CD4-positive, alpha-beta memory T cell (primary cell): ENCODE measurements at regions of chr7 and their contacts with region 1.

Region 1: DNA sequence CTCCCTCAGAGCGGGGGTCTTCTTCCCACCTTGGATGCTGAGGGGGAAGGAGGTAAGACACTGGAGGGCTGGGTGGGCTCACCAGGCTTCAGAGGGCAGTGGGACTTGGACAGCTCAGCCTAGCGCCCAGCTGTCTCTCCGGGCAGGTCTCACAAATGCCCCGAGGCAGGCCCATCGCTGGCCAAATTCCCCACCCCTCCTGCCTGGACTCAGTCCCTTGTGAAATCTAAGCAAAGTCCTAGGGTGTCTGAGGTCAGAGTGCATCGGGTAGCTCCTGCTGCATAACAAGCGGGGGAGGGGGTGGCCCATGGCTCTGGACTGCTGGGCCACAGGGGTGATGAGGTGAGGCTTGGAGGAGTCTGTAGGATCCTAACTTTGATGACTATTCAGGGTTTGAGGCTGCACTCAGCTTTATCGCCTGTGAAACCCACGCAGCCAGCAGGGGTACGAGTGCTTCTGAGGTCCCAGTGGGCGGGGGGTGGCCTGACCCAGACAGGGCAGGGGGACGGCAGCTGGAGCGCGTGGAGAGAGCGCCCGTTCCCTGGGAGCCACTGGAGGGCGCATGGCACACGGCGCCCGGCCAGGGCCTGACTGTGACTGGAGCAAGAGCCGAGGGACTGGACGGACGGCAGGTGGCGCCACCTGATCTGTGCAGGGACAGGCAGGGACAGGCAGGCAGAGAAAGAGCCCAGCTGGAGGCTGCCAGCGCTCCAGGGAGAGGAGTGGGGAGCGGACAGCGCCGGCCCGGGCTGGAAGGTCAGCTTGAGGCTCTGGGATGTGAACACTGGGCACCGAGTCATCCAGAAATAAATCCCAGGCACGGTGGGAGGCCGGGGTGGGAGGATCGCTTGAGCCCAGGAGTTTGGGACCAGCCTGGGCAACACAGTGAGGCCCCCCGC is 10.0 kb downstream of the CYP2W1 start:
- DNase-seq: peak; percentile 88 to 92 (median 89)
- H3K4me3 ChIP-seq: no peak overlapping the region
- H3K4me3 Mint-ChIP-seq: no peak overlapping the region
- H3K27ac ChIP-seq: no peak overlapping the region
- H3K27ac Mint-ChIP-seq: peak overlapping the region in 2 of 7 donors; percentile 51 to 89
- H3K4me1 ChIP-seq: peaks cover 4% of the 10 kb centered on the region
- H3K4me1 Mint-ChIP-seq: peaks cover 0 to 6% (median 3%) of the 10 kb centered on the region in 4 donors
- H3K27me3 ChIP-seq: no peaks in the 10 kb centered on the region
- H3K27me3 Mint-ChIP-seq: no peaks in the 10 kb centered on the region

Region 2: DNA sequence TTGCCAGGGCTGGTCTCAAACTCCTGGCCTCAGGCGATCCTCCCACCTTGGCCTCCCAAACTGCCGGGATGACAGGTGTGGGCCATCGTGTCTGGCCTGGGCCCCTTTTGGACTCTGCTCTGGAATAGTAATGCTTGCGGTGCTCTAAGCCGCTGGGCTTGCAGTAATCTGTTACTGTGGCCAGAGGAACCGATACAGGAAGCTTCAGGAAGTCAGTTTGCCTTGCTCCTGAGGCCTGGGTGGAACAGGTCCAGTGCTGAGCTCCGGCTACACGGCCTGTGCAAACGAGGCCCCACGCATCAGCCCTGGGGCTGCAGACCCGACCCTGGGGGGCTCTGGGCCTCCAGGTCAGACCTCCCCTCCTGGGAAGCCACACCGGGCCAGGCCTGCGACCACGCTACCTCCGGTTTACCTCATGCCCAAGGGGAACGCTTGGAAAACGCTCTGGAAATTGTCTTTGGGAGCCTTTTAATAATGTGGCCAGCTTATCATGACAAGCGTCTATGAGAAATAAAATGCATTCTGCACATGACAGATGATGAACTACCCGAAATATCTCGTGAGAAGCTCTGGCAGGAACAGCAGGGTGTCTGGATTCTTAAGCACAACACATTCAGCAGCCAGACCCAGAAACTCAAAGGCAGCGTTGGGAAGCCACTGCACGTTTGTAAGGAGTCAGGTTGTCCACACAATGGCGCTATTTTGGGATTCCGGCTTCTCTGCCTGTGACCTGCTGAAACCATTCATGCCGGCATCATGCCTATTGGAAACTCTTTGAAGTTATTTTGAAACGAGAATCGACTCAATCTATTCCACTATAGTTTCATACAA is 28.3 kb before region 1 on chr7:
- CTCF ChIA-PET with region 1: no interaction called
- POLR2A ChIA-PET with region 1: no interaction called
- intact Hi-C with region 1: no loop called
- DNase-seq: peak in 1 of 5 donors; percentile 9
- H3K4me3 ChIP-seq: no peak overlapping the region
- H3K4me3 Mint-ChIP-seq: peak overlapping the region in 2 of 8 donors; percentile 35 to 40
- H3K27ac ChIP-seq: no peak overlapping the region
- H3K27ac Mint-ChIP-seq: peak overlapping the region in 3 of 7 donors; percentile 27 to 70 (median 51)
- H3K4me1 ChIP-seq: peaks cover 24% of the 10 kb centered on the region
- H3K4me1 Mint-ChIP-seq: peaks cover 10 to 32% (median 22%) of the 10 kb centered on the region in 4 donors
- H3K27me3 ChIP-seq: no peaks in the 10 kb centered on the region
- H3K27me3 Mint-ChIP-seq: peaks cover 7 to 11% of the 10 kb centered on the region in 2 donors

Region 3: DNA sequence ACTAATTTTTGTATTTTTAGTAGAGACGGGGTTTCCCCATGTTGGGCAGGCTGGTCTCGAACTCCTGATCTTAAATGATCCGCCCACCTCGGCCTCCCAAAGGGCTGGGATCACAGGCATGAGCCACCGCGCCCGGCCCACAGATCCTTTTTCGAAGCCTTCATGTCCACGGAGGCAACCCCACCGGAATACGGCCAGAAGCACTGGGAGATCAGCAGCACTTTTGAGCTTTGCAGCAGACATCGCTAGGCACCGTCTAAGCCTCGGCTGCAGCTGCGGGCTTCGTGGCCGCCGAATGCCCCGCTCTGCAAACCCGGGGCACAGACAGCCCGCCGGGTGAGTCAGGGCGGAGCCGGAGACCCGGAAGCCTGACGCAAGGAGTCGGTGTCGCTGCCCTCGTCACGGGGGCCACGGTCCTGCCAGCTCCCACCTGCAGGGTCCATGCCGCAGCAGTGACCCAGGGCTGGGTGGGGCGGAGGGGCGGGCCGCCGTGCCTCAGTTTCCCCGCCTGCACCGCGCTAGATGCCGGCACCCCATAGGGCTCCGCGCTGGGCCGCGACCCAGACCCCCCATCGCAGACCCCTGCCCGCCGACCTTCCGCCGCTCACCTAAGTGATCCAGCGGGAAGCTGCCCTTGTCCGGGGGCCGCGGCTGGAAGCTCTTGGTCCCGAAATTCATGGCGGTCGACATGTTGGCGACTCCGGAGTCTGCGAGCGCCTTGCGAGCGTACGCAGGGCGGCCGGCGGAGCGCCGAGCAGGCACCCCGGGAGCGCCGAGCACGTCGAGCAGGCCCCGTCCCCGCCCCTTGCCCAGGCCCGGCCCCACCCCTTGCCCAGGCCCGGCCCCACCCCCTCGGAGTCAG is 17.9 kb before region 1 on chr7 and contains the start of gene COX19:
- CTCF ChIA-PET with region 1: interaction called, 54 read pairs
- POLR2A ChIA-PET with region 1: interaction called, 7 read pairs
- intact Hi-C with region 1: no loop called
- DNase-seq: peak; percentile 87 to 94 (median 88)
- H3K4me3 ChIP-seq: peak within 1 kb of the TSS; percentile 58 to 94
- H3K4me3 Mint-ChIP-seq: peak within 1 kb of the TSS; percentile 89 to 96 (median 94)
- H3K27ac ChIP-seq: peak within 1 kb of the TSS; percentile 99
- H3K27ac Mint-ChIP-seq: peak within 1 kb of the TSS; percentile 90 to 97 (median 93)
- H3K4me1 ChIP-seq: peaks cover 38% of the 10 kb centered on the region
- H3K4me1 Mint-ChIP-seq: peaks cover 13 to 37% (median 26%) of the 10 kb centered on the region in 4 donors
- H3K27me3 ChIP-seq: no peaks in the 10 kb centered on the region
- H3K27me3 Mint-ChIP-seq: no peaks in the 10 kb centered on the region
- total RNA-seq, gene COX19: 46.2 to 50.0 TPM

Region 4: GRCh38 chr7:1028031-1028770 is 35.2 kb after region 1 on chr7:
- CTCF ChIA-PET with region 1: interaction called, 8 read pairs
- POLR2A ChIA-PET with region 1: no interaction called
- intact Hi-C with region 1: loop called (anchors 2 kb)
- DNase-seq: peak; percentile 80 to 86 (median 83)
- H3K4me3 ChIP-seq: peak overlapping the region; percentile 57 to 64
- H3K4me3 Mint-ChIP-seq: peak overlapping the region; percentile 65 to 90 (median 81)
- H3K27ac ChIP-seq: peak overlapping the region; percentile 76
- H3K27ac Mint-ChIP-seq: peak overlapping the region; percentile 82 to 95 (median 91)
- H3K4me1 ChIP-seq: peaks cover 35% of the 10 kb centered on the region
- H3K4me1 Mint-ChIP-seq: peaks cover 22 to 53% (median 36%) of the 10 kb centered on the region in 4 donors
- H3K27me3 ChIP-seq: no peaks in the 10 kb centered on the region
- H3K27me3 Mint-ChIP-seq: no peaks in the 10 kb centered on the region

Region 5: GRCh38 chr7:1059200-1060091 is 66.5 kb after region 1 on chr7:
- CTCF ChIA-PET with region 1: interaction called, 359 read pairs
- POLR2A ChIA-PET with region 1: interaction called, 3 read pairs
- intact Hi-C with region 1: no loop called
- DNase-seq: no peak
- H3K4me3 ChIP-seq: no peak overlapping the region
- H3K4me3 Mint-ChIP-seq: peak overlapping the region in 3 of 8 donors; percentile 16 to 72 (median 29)
- H3K27ac ChIP-seq: no peak overlapping the region
- H3K27ac Mint-ChIP-seq: peak overlapping the region in 6 of 7 donors; percentile 24 to 88 (median 81)
- H3K4me1 ChIP-seq: peaks cover 27% of the 10 kb centered on the region
- H3K4me1 Mint-ChIP-seq: peaks cover 11 to 45% (median 24%) of the 10 kb centered on the region in 4 donors
- H3K27me3 ChIP-seq: no peaks in the 10 kb centered on the region
- H3K27me3 Mint-ChIP-seq: no peaks in the 10 kb centered on the region

Region 6: GRCh38 chr7:1086588-1087464 is 93.9 kb after region 1 on chr7:
- CTCF ChIA-PET with region 1: interaction called, 13 read pairs
- POLR2A ChIA-PET with region 1: no interaction called
- intact Hi-C with region 1: no loop called
- DNase-seq: peak; percentile 56 to 67 (median 59)
- H3K4me3 ChIP-seq: peak overlapping the region in 1 of 2 donors; percentile 21
- H3K4me3 Mint-ChIP-seq: peak overlapping the region; percentile 65 to 79 (median 70)
- H3K27ac ChIP-seq: no peak overlapping the region
- H3K27ac Mint-ChIP-seq: peak overlapping the region in 2 of 7 donors; percentile 36 to 47
- H3K4me1 ChIP-seq: peaks cover 10% of the 10 kb centered on the region
- H3K4me1 Mint-ChIP-seq: peaks cover 8 to 14% (median 9%) of the 10 kb centered on the region in 4 donors
- H3K27me3 ChIP-seq: no peaks in the 10 kb centered on the region
- H3K27me3 Mint-ChIP-seq: no peaks in the 10 kb centered on the region

Region 7: GRCh38 chr7:1368682-1369571 is 376.0 kb after region 1 on chr7:
- CTCF ChIA-PET with region 1: no interaction called
- POLR2A ChIA-PET with region 1: no interaction called
- intact Hi-C with region 1: no loop called
- DNase-seq: peak in 1 of 5 donors; percentile 5
- H3K4me3 ChIP-seq: no peak overlapping the region
- H3K4me3 Mint-ChIP-seq: peak overlapping the region in 2 of 8 donors; percentile 31 to 60
- H3K27ac ChIP-seq: no peak overlapping the region
- H3K27ac Mint-ChIP-seq: no peak overlapping the region
- H3K4me1 ChIP-seq: no peaks in the 10 kb centered on the region
- H3K4me1 Mint-ChIP-seq: peaks cover 0 to 7% (median under 1%) of the 10 kb centered on the region in 4 donors
- H3K27me3 ChIP-seq: peaks cover 4% of the 10 kb centered on the region
- H3K27me3 Mint-ChIP-seq: peaks cover 27 to 42% of the 10 kb centered on the region in 2 donors

Region 8: DNA sequence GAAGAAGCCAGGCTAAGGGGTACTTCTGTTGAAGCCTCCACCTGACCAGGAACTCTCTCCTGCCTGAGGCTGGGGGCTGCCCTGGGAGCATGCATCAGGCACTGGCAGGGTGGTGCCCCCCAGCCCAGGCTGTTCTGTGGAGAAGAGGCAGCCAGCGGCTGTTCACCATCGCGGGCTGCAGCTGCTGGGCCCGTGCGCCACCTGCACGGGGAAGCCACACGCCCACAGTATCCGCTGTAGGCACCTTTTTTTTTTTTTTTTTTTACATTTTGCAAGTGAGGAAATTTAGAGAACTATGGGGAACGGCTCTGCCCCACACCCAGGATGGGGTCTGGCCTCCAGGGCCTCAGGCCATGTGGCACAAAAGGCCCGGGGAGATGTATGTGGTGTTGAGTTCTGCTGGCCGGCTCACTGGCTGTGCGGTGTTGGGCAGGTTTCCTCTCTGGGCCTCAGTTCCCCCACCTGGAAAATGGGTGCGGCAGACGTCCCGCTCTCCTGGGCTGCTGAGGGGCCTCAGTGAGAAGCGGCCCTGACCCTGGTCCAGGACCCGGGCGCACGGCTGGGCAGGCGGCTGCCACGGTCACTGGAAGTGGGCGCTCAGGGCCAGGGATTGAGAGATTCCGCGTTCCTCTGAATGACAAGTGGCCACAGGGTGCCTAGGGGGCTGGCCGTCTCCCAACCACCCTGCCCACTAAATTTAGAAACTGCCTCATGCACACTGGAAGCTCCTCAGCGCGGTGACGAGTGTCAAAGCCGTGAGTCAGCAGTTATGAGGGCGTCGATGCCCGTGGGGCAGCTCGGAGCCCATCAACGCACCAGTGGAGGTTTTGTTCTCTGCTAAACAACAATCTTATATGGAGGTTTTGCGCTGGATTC is 520.1 kb after region 1 on chr7:
- CTCF ChIA-PET with region 1: no interaction called
- POLR2A ChIA-PET with region 1: no interaction called
- intact Hi-C with region 1: no loop called
- DNase-seq: peak in 4 of 5 donors; percentile 55 to 66 (median 60)
- H3K4me3 ChIP-seq: peak overlapping the region in 1 of 2 donors; percentile 9
- H3K4me3 Mint-ChIP-seq: peak overlapping the region in 6 of 8 donors; percentile 35 to 67 (median 47)
- H3K27ac ChIP-seq: no peak overlapping the region
- H3K27ac Mint-ChIP-seq: peak overlapping the region in 6 of 7 donors; percentile 36 to 85 (median 72)
- H3K4me1 ChIP-seq: peaks cover 20% of the 10 kb centered on the region
- H3K4me1 Mint-ChIP-seq: peaks cover 2 to 23% (median 12%) of the 10 kb centered on the region in 4 donors
- H3K27me3 ChIP-seq: no peaks in the 10 kb centered on the region
- H3K27me3 Mint-ChIP-seq: no peaks in the 10 kb centered on the region